ENCODE measurements at regions of chr22 and their contacts with region 1.

Region 1: DNA sequence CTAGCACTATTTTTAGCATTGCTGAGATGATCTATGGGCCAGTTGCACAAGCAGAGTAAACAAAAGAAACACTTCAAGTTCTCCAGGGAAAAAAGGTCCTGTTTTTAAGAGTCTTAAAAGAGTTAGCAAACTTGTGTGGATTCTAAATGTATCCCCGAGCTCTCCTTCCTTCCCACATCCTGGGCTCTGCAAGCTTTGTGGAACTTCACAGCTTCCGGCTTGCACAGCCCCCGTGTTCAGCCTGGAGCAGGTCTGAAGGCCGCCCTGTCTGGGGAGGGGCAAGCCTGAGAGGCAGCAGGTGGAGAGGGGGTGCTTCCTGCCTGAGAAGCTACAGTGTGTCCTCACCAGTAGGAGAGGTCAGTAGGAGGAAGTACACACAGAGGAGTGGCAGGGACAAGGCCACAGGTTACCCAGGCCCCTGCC is 35.1 kb upstream of the SUSD2 start:
- DNase-seq: no peak
- H3K4me3 ChIP-seq: no peak overlapping the region
- CTCF ChIP-seq: no peak

Region 2: GRCh38 chr22:24189249-24190158 is 43.3 kb after region 1 on chr22:
- in situ Hi-C with region 1: no loop called
- DNase-seq: no peak
- H3K4me3 ChIP-seq: no peak overlapping the region
- CTCF ChIP-seq: peak; percentile 91

Region 3: DNA sequence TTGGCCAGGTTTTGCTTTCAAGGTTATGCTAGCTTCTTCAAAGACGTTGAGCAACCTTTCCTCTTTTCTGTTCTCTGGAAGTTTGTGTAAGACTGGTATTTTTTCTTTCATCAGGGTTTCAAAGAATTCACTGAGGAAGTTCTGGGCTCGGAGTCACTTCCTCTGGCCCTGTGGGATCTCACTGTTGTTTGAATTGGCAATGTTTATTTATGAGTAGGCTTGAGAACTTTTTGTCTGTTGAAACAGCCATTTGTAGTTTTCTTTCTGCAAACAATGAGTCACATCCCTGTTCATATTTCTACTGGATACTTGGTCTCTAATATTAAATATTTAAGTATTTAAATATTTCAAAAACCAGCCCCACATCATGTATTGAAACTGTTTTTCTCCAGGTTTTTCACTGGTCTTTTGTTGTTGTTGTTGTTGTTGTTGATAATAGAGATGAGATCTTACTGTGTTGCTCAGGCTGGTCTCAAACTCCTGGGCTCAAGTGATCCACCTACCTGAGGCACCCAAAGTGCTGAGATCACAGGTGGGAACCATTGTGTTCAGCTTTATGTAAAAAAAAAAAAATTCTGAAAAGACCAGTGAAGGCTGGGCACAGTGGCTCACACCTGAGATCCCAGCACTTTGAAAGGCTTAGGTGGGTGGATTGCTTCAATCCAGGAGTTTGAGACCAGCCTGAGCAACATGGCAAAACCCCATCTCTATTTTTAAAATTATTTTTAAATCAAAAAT is 62.0 kb after region 1 on chr22:
- in situ Hi-C with region 1: loop called (anchors 10 kb)
- DNase-seq: peak; percentile 96
- H3K4me3 ChIP-seq: no peak overlapping the region
- CTCF ChIP-seq: no peak